Activated CD4-positive, alpha-beta T cell treated with anti-CD3 and anti-CD28 coated beads for 36 hours (primary cell): ENCODE measurements at regions of chr6 and their contacts with region 1.

Region 1: DNA sequence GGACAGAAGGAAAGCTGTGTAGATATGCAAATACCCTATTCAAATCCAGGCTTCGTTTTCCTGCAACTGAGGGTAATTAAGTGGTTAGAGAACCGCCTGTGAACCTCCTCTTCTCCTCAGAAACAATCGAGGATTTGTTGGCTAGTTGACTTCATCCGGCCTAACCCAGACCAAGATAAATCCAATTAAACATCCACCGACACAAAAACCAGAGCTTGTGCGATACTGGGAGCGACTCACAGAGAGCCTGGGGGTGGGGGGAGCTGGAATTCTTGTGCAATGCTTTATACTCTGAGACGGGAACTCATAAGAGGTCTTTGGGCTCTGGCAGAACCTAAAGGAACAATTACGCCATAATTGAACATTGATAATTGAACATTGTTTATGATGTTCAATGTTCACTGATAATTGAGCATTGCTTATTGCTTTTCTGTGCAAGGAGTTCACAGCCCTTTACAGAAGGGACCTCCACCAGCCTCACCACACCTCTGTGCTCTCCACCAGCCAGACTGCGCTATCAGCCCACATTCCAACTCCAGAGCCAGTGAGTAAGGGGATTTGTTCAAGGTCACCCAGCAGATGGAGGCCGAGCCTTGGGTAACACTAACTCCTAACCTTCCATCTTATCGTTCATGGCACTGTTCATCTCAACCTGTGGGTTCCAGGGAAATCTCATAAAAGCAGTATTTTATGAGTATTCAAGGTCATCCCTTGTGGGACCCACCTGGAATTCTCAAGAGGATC is 429.6 kb upstream of the JARID2 start:
- DNase-seq: no peak
- ATAC-seq: no peak
- H3K4me3 Mint-ChIP-seq: no peak overlapping the region
- H3K27ac Mint-ChIP-seq: no peak overlapping the region
- H3K4me1 Mint-ChIP-seq: peaks cover 18% of the 10 kb centered on the region
- H3K27me3 Mint-ChIP-seq: no peaks in the 10 kb centered on the region

Region 2: DNA sequence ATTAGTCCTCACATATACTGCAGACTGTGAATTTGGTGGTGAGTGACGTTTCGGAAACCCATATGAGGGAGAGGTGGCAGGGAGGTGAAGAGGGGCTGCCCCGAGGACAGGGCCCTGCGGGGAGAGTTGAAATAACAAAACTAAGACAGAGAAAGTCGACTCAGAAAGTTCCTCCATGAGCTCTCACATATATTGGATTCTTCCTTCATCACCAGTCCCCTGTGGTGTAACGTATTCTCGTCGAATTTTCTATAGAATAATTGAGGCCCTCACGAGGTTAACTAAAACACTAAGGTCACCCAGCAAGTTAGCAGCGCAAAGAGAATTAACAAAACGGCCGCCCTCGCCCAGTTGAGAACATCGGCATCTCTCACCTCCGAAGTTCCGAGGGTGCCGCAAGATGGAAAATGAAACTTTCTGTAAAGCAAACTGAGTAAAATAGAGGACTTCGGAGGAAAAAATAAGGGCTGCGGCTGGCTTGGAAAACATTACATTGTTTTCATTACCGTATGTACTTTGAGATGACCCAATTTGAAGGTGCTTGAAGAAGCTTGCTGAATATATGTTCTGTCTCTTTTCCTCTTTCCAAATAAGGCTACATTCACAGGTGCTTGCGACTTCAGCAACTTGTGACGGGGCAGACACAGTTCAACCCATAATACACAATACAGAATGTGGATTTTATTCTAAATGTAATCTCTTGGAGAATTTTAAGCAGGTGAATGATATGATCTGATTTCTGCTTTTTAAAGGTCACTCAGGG is 61.4 kb before region 1 on chr6:
- CTCF ChIA-PET with region 1: no interaction called
- POLR2A ChIA-PET with region 1: no interaction called
- intact Hi-C with region 1: loop called in 1 of 2 experiments (anchors 2 kb)
- DNase-seq: peak; percentile 82
- ATAC-seq: peak; percentile 81
- H3K4me3 Mint-ChIP-seq: peak overlapping the region; percentile 40
- H3K27ac Mint-ChIP-seq: peak overlapping the region; percentile 96
- H3K4me1 Mint-ChIP-seq: peaks cover 60% of the 10 kb centered on the region
- H3K27me3 Mint-ChIP-seq: no peaks in the 10 kb centered on the region

Region 3: GRCh38 chr6:14792118-14792955 is 24.0 kb before region 1 on chr6:
- CTCF ChIA-PET with region 1: no interaction called
- POLR2A ChIA-PET with region 1: no interaction called
- intact Hi-C with region 1: no loop called
- DNase-seq: no peak
- ATAC-seq: no peak
- H3K4me3 Mint-ChIP-seq: no peak overlapping the region
- H3K27ac Mint-ChIP-seq: no peak overlapping the region
- H3K4me1 Mint-ChIP-seq: peaks cover 13% of the 10 kb centered on the region
- H3K27me3 Mint-ChIP-seq: peaks cover 2% of the 10 kb centered on the region

Region 4: DNA sequence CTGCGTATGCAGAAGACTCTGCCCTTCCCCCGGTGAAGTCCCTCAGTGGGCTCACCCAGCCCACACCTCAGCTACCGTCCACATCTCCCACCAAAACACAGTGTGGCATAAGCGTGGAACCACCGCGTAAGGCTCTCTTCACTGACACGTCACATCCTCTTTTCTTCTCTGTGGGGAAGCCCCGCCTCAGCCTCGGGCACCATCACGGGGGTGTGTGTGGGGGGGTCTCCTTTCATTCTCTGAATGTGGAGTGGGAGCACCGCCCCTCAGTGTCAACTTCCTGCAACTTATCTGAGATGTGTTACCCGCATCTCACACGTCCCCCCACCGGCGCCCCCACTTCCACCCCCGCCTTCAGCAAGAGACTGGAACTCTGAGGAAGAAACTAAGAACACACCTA is 41.2 kb after region 1 on chr6:
- CTCF ChIA-PET with region 1: no interaction called
- POLR2A ChIA-PET with region 1: no interaction called
- intact Hi-C with region 1: loop called (anchors 1 kb)
- DNase-seq: peak; percentile 80
- ATAC-seq: peak; percentile 71
- H3K4me3 Mint-ChIP-seq: peak overlapping the region; percentile 7
- H3K27ac Mint-ChIP-seq: peak overlapping the region; percentile 95
- H3K4me1 Mint-ChIP-seq: peaks cover 48% of the 10 kb centered on the region
- H3K27me3 Mint-ChIP-seq: no peaks in the 10 kb centered on the region